PC-9 (cell line): ENCODE measurements at regions of chr3 and their contacts with region 1.

Region 1: DNA sequence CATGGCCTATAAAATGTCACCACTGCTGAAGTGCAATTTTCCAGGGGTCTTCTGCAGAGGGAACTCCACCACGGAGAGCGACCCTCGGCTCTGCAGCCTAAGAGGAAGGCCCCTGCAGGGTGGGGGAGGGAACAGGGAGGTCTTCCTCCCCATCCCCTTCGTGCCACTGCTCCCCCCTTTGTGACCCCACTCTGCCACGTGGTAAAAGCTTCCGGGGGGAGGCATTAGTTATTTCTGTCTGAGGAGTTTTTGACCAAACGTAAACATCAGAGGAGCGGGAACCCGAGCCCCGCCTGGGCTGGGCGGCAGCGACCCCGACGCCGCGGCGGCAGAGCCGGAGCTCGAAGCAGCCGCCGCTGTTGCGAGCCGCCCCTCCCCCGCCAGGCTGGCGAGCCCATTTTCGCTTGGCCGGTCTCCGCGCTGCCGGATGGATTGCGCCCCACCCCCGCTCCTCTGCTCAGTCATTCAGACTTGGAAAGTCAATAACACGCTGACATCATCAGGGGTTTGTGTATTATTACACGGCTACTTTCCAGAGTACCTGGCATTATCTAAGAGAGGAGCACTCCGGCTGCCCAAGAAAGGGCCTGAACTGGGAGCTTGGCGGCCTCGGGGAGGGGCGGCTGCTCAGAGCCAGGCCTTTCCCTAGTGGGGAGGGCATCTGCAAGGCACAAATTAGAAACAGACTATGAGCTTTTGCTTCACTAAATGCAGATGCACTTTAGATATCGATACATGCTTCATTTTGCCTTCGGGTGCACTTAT is 162.5 kb upstream of the TBL1XR1 start:
- DNase-seq: peak; percentile 98
- H3K4me3 ChIP-seq: peak overlapping the region; percentile 49
- H3K27ac ChIP-seq: peak overlapping the region; percentile 96
- H3K4me1 ChIP-seq: peaks cover 70% of the 10 kb centered on the region
- H3K27me3 ChIP-seq: no peaks in the 10 kb centered on the region
- CTCF ChIP-seq: no peak

Region 2: DNA sequence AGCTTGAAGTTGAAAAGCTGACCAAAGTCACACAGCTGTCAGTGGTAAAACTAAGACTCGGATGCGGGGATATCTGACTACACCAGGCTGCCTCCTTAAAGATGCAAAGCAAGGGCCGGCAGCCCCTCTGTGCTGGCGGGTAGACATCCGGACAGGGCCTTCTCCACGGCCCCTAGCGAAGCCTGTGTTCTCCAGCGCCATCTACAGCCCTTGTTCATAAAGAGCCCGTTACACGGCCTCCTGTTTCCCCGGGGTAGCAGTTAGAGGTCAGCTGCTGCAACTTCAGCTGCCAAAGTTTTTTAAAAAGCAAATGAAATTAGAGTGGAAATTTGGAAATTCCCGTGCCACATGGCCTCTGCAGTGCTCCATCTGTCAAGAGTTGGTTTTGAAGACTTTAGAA is 545.5 kb before region 1 on chr3:
- CTCF ChIA-PET with region 1: no interaction called
- POLR2A ChIA-PET with region 1: no interaction called
- intact Hi-C with region 1: no loop called
- DNase-seq: peak in 1 of 2 experiments; percentile 5
- H3K4me3 ChIP-seq: no peak overlapping the region
- H3K27ac ChIP-seq: no peak overlapping the region
- H3K4me1 ChIP-seq: no peaks in the 10 kb centered on the region
- H3K27me3 ChIP-seq: no peaks in the 10 kb centered on the region
- CTCF ChIP-seq: no peak; the same call in 1 of the 2 replicates

Region 3: GRCh38 chr3:177249203-177249602 is 110.6 kb before region 1 on chr3:
- CTCF ChIA-PET with region 1: no interaction called
- POLR2A ChIA-PET with region 1: interaction called, 4 read pairs
- intact Hi-C with region 1: loop called (anchors 2 kb)
- DNase-seq: peak; percentile 37 to 94
- H3K4me3 ChIP-seq: no peak overlapping the region
- H3K27ac ChIP-seq: peak overlapping the region; percentile 62
- H3K4me1 ChIP-seq: peaks cover 18% of the 10 kb centered on the region
- H3K27me3 ChIP-seq: no peaks in the 10 kb centered on the region
- CTCF ChIP-seq: no peak

Region 4: DNA sequence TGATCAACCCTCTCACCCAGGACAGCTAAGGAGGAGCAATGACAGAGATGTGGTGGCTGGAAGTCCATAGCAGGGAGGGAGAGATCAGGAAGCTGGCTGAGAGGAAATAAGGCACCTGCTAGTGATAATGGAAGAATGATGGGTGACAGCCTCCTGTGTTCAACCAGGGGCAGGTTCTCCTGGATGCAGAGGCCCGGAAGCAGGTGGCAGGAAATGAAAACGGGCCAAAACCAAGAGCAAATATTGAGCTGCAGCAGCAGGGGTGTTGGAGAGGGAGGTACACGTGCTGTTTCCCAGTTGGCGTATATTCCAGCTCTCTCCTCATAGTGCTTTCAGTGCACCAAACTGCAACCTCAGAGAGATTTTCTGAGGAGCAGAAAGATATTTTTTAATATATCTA is 51.0 kb after region 1 on chr3:
- CTCF ChIA-PET with region 1: no interaction called
- POLR2A ChIA-PET with region 1: no interaction called
- intact Hi-C with region 1: no loop called
- DNase-seq: no peak
- H3K4me3 ChIP-seq: no peak overlapping the region
- H3K27ac ChIP-seq: no peak overlapping the region
- H3K4me1 ChIP-seq: no peaks in the 10 kb centered on the region
- H3K27me3 ChIP-seq: no peaks in the 10 kb centered on the region
- CTCF ChIP-seq: no peak

Region 5: GRCh38 chr3:177441813-177442646 is 82.3 kb after region 1 on chr3:
- CTCF ChIA-PET with region 1: no interaction called
- POLR2A ChIA-PET with region 1: interaction called, 8 read pairs
- intact Hi-C with region 1: loop called (anchors 1 kb)
- DNase-seq: no peak
- H3K4me3 ChIP-seq: no peak overlapping the region
- H3K27ac ChIP-seq: no peak overlapping the region
- H3K4me1 ChIP-seq: peaks cover 21% of the 10 kb centered on the region
- H3K27me3 ChIP-seq: no peaks in the 10 kb centered on the region
- CTCF ChIP-seq: no peak

Region 6: DNA sequence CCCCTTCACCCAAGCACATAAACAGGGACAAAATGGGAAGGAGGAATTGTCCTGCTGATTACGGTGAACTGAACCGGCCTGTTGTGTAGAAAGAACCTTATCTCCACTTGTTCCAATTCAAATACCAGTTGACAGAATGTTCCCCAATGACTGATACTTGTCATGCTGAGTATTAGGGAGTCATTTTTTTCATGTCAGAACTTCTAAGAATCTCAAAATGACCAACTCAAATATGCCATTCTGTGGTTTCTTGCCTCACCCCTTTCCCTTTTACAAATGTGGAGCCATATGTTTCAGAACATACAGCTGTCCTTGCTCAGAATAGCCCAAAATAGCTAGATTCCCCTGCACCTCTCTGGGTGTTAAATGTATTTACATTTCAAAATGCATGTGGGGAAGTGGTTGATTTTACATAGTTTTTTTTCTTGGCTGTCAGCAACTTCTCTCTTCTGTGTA is 243.4 kb after region 1 on chr3:
- CTCF ChIA-PET with region 1: no interaction called
- POLR2A ChIA-PET with region 1: no interaction called
- intact Hi-C with region 1: loop called (anchors 1 kb)
- DNase-seq: no peak
- H3K4me3 ChIP-seq: peak overlapping the region; percentile 9; the same call in 1 of the 2 replicates
- H3K27ac ChIP-seq: peak overlapping the region; percentile 89
- H3K4me1 ChIP-seq: peaks cover 61% of the 10 kb centered on the region
- H3K27me3 ChIP-seq: no peaks in the 10 kb centered on the region
- CTCF ChIP-seq: no peak

Region 7: GRCh38 chr3:177810162-177810623 is 450.4 kb after region 1 on chr3:
- CTCF ChIA-PET with region 1: no interaction called
- POLR2A ChIA-PET with region 1: no interaction called
- intact Hi-C with region 1: loop called (anchors 2 kb)
- DNase-seq: peak in 1 of 2 experiments; percentile 99
- H3K4me3 ChIP-seq: no peak overlapping the region
- H3K27ac ChIP-seq: peak overlapping the region; percentile 82
- H3K4me1 ChIP-seq: peaks cover 34% of the 10 kb centered on the region
- H3K27me3 ChIP-seq: no peaks in the 10 kb centered on the region
- CTCF ChIP-seq: no peak

Region 8: GRCh38 chr3:178325330-178325729 is 965.6 kb after region 1 on chr3:
- CTCF ChIA-PET with region 1: no interaction called
- POLR2A ChIA-PET with region 1: interaction called, 4 read pairs
- intact Hi-C with region 1: loop called (anchors 1 kb)
- DNase-seq: no peak
- H3K4me3 ChIP-seq: no peak overlapping the region
- H3K27ac ChIP-seq: no peak overlapping the region
- H3K4me1 ChIP-seq: peaks cover 13% of the 10 kb centered on the region
- H3K27me3 ChIP-seq: no peaks in the 10 kb centered on the region
- CTCF ChIP-seq: peak; percentile 72